Aorta (tissue), 5 donors: ENCODE measurements at regions of chr18 and their contacts with region 1.

Region 1: GRCh38 chr18:63262369-63263335 is 56.9 kb downstream of the BCL2 start:
- DNase-seq: peak; percentile 71 to 72
- ATAC-seq: peak; percentile 90
- H3K4me3 ChIP-seq: no peak overlapping the region
- H3K27ac ChIP-seq: peak overlapping the region; percentile 72 to 94
- H3K4me1 ChIP-seq: no peaks in the 10 kb centered on the region
- H3K27me3 ChIP-seq: no peaks in the 10 kb centered on the region

Region 2: GRCh38 chr18:63131106-63131958 is 131.3 kb before region 1 on chr18:
- intact Hi-C with region 1: loop called (anchors 2 to 5 kb)
- DNase-seq: no peak
- ATAC-seq: peak; percentile 67
- H3K4me3 ChIP-seq: no peak overlapping the region
- H3K27ac ChIP-seq: peak overlapping the region; percentile 33
- H3K4me1 ChIP-seq: no peaks in the 10 kb centered on the region
- H3K27me3 ChIP-seq: no peaks in the 10 kb centered on the region

Region 3: DNA sequence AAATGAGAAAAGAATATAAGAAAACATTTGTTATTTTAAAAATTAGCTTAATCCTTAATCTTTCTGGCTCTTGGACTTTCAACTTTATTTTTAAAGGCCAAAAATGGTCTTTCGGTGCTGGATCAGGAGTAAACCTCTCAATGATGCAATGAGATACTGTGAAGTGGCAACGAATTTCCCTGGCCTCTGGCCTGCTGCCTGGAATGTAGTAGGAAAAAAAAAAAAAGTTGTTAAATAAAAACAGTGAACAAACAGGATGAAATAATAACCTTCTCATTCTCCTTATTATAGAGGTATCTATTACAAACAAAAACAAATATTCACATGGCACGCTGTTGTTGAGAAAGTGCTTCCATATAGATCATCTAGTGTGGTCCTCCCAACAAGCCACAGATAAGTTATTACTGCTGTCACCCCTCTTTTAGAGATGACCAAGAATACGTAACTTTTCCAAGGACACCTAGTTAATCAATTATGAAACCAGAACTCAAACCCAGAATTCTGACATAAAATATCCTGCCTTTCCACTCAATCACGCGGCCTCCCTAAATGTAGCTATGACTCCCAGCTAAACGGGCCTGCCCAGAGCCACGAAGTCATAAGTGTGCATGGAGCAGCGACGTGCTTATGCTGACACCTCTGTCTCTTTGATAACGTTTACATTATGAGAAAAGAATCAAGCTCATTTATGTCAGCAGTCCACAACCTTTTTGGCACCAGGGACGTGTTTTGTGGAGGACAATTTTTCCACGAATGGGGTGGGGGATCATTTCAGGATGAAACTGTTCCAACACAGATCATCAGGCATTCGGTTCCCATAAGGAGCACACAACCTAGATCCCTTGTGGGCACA is 114.0 kb before region 1 on chr18:
- intact Hi-C with region 1: loop called in 1 of 2 experiments (anchors 5 kb)
- DNase-seq: no peak
- ATAC-seq: peak; percentile 33
- H3K4me3 ChIP-seq: no peak overlapping the region
- H3K27ac ChIP-seq: no peak overlapping the region
- H3K4me1 ChIP-seq: peaks cover 1 to 6% of the 10 kb centered on the region in 2 donors
- H3K27me3 ChIP-seq: no peaks in the 10 kb centered on the region